Colonic mucosa (tissue), 4 donors: ENCODE measurements at regions of chr22 and their contacts with region 1.

Region 1: GRCh38 chr22:23539135-23539838 is 40.8 kb downstream of the IGLL1 start:
- DNase-seq: peak; percentile 91
- H3K4me3 ChIP-seq: no peak overlapping the region
- H3K27ac ChIP-seq: no peak overlapping the region
- H3K4me1 ChIP-seq: no peaks in the 10 kb centered on the region
- H3K27me3 ChIP-seq: no peaks in the 10 kb centered on the region
- CTCF ChIP-seq: peak; percentile 79

Region 2: DNA sequence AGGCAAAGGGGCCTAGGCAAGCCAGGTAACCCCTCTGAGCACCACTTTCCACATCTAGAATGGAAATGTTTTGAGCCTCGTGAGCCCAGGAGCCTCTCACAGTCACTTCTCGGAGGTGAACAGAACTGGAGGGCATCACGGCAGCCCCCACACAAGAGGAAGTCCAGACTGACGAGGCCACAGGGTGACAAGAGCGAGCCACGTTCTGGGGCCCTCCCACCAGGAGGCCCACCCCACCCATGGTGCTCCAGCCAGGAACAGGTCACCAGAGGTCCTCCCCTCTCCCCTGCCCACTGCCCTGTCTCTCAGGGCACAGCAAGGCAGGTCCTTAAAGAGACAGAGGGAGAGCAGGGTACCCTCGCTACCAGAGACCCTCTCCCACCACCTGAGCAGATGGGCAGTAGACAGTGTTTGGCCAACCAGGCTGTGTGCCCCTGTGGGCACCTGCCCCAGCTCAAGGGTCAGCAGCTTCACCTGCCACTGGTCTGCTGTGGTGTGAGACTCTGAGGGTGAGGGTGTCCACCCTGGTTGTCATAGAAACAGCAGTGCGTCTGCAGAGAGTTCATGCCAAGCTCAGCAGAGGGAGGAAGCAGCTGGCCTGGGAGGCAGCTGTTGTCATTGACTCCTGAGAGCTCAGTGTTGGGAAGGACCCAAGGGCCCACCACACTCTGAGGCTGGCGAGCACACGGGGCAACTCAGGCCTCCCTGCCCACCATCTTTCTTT is 428.9 kb before region 1 on chr22:
- intact Hi-C with region 1: no loop called
- DNase-seq: no peak
- H3K4me3 ChIP-seq: no peak overlapping the region
- H3K27ac ChIP-seq: no peak overlapping the region
- H3K4me1 ChIP-seq: no peaks in the 10 kb centered on the region
- H3K27me3 ChIP-seq: no peaks in the 10 kb centered on the region
- CTCF ChIP-seq: no peak

Region 3: GRCh38 chr22:23315341-23315917 is 223.9 kb before region 1 on chr22:
- intact Hi-C with region 1: loop called (anchors 10 kb)
- DNase-seq: peak; percentile 60
- H3K4me3 ChIP-seq: no peak overlapping the region
- H3K27ac ChIP-seq: no peak overlapping the region
- H3K4me1 ChIP-seq: no peaks in the 10 kb centered on the region
- H3K27me3 ChIP-seq: no peaks in the 10 kb centered on the region
- CTCF ChIP-seq: peak; percentile 91

Region 4: GRCh38 chr22:23402275-23403151 is 136.8 kb before region 1 on chr22:
- intact Hi-C with region 1: loop called (anchors 5 kb)
- DNase-seq: peak; percentile 85
- H3K4me3 ChIP-seq: peak overlapping the region; percentile 32
- H3K27ac ChIP-seq: no peak overlapping the region
- H3K4me1 ChIP-seq: no peaks in the 10 kb centered on the region
- H3K27me3 ChIP-seq: no peaks in the 10 kb centered on the region
- CTCF ChIP-seq: peak; percentile 33

Region 5: GRCh38 chr22:23849009-23850006 is 310.0 kb after region 1 on chr22:
- intact Hi-C with region 1: loop called (anchors 5 kb)
- DNase-seq: peak; percentile 88
- H3K4me3 ChIP-seq: no peak overlapping the region
- H3K27ac ChIP-seq: no peak overlapping the region
- H3K4me1 ChIP-seq: peaks cover 9% of the 10 kb centered on the region
- H3K27me3 ChIP-seq: no peaks in the 10 kb centered on the region
- CTCF ChIP-seq: peak; percentile 99